Activated naive CD4-positive, alpha-beta T cell treated with anti-CD3 and anti-CD28 coated beads for 36 hours (primary cell): ENCODE measurements at regions of chr17 and their contacts with region 1.

Region 1: DNA sequence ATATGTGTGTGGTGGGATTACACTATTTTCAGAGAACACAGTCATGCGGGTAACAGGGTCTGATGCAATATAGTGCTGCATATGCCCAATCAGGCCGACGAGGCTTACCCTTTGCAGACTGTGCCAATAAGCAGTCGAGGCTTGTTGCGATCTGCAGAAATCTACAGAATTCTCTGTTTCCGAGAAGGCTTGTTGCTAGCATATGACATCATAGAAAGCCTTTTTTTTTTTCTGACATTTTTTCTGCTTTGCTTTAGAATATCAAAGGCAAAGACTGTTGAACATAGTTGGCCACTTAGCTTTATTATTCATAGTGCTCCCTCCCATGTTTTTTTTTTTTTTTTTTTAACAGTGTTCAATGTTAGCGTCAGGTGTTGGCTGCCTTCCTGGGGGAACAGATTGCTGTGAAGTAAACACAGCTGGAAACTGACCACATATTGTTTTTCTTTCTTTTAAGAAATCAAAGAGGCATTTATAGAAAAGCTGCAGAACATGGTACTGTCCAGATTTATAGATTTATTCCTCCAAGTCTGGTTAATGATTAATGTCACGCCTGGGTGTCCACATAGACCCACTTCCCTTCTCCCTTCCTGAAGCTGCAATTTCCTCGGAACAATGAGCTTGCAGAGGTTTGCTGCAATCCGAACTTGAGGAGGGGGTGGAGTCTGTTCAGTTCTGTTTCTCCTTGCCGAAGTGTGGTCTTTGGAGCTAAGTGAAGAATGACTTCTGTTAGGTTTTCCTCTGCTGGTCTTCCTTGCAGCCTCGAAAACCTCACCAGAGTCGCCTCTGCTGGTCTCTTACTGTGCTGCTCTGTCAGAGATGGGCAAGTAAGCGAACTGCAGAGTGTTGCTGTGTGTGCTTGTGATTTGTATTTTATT is 87.3 kb downstream of the MAP2K6 start:
- DNase-seq: peak; percentile 26
- H3K4me3 Mint-ChIP-seq: peak overlapping the region; percentile 31
- H3K27ac Mint-ChIP-seq: no peak overlapping the region
- H3K4me1 Mint-ChIP-seq: peaks cover 24% of the 10 kb centered on the region
- H3K27me3 Mint-ChIP-seq: no peaks in the 10 kb centered on the region

Region 2: GRCh38 chr17:69448431-69449102 is 53.3 kb before region 1 on chr17:
- CTCF ChIA-PET with region 1: no interaction called
- intact Hi-C with region 1: loop called (anchors 5 kb)
- DNase-seq: no peak
- H3K4me3 Mint-ChIP-seq: no peak overlapping the region
- H3K27ac Mint-ChIP-seq: no peak overlapping the region
- H3K4me1 Mint-ChIP-seq: peaks cover 29% of the 10 kb centered on the region
- H3K27me3 Mint-ChIP-seq: no peaks in the 10 kb centered on the region